ENCODE measurements at regions of chrX and their contacts with region 1.

Region 1: DNA sequence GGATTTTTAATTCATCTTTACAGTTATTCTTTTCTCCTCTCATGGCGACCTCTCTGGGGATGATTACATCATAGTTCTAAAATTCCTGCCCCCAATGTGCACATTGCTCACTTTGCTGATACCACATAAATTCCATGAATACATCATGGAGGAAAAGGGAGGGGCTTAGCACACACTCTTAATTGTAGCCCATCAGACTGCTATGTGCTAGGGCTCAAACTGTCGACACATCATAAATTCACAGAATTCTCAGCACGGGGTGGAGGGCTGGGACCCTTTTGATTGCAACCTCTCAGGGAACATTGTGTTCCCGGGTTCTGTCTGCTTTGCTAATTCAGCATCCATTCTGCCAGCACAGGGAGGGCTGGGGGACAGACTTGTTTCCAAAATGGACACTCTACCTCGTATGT is 592.9 kb downstream of the BCOR start:
- DNase-seq: no peak
- H3K4me3 Mint-ChIP-seq: no peak overlapping the region
- H3K27ac Mint-ChIP-seq: no peak overlapping the region
- H3K4me1 Mint-ChIP-seq: peaks cover 15% of the 10 kb centered on the region
- H3K27me3 Mint-ChIP-seq: no peaks in the 10 kb centered on the region

Region 2: GRCh38 chrX:39445336-39445735 is 59.5 kb before region 1 on chrX:
- intact Hi-C with region 1: loop called (anchors 10 kb)
- DNase-seq: no peak
- H3K4me3 Mint-ChIP-seq: no peak overlapping the region
- H3K27ac Mint-ChIP-seq: peak overlapping the region; percentile 21
- H3K4me1 Mint-ChIP-seq: peaks cover 51% of the 10 kb centered on the region
- H3K27me3 Mint-ChIP-seq: no peaks in the 10 kb centered on the region

Region 3: GRCh38 chrX:39613482-39613921 is 108.6 kb after region 1 on chrX:
- intact Hi-C with region 1: loop called (anchors 1 kb)
- DNase-seq: no peak
- H3K4me3 Mint-ChIP-seq: peak overlapping the region; percentile 85
- H3K27ac Mint-ChIP-seq: peak overlapping the region; percentile 88
- H3K4me1 Mint-ChIP-seq: peaks cover 38% of the 10 kb centered on the region
- H3K27me3 Mint-ChIP-seq: no peaks in the 10 kb centered on the region